ENCODE measurements at regions of chr14 and their contacts with region 1.

Region 1: GRCh38 chr14:91911474-91912032 is 35.9 kb downstream of the FBLN5 start:
- DNase-seq: no peak
- H3K4me3 ChIP-seq: no peak overlapping the region
- H3K27ac ChIP-seq: no peak overlapping the region
- H3K4me1 ChIP-seq: no peaks in the 10 kb centered on the region
- H3K27me3 ChIP-seq: no peaks in the 10 kb centered on the region
- CTCF ChIP-seq: peak in 2 of 3 experiments; percentile 28 to 43
- EP300 ChIP-seq: no peak
- POLR2A ChIP-seq: no peak

Region 2: GRCh38 chr14:91277546-91278382 is 633.8 kb before region 1 on chr14:
- intact Hi-C with region 1: no loop called
- DNase-seq: no peak
- H3K4me3 ChIP-seq: no peak overlapping the region
- H3K27ac ChIP-seq: no peak overlapping the region
- H3K4me1 ChIP-seq: no peaks in the 10 kb centered on the region
- H3K27me3 ChIP-seq: no peaks in the 10 kb centered on the region
- CTCF ChIP-seq: no peak
- EP300 ChIP-seq: no peak
- POLR2A ChIP-seq: no peak

Region 3: DNA sequence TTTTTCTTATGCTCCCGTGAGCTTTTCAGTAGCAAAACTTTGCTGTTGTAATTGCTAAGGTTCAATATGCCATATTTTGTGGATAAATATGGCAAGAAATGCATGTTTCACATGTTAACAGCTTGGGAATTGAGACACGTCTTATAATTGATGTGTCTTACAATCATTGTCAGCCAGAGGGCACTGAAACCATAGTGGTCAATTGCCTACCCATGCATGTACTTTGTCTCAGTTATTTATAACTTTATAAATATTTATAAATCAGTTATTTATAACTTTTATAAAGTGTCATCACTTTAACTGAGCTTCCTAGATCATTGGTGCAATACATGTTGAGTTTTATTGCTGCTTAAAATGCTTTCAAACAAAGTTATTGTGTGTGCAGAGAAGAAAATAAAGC is 261.6 kb before region 1 on chr14:
- intact Hi-C with region 1: loop called (anchors 2 kb)
- DNase-seq: no peak
- H3K4me3 ChIP-seq: no peak overlapping the region
- H3K27ac ChIP-seq: no peak overlapping the region
- H3K4me1 ChIP-seq: peaks cover 0 to 7% (median 5%) of the 10 kb centered on the region in 4 donors
- H3K27me3 ChIP-seq: no peaks in the 10 kb centered on the region
- CTCF ChIP-seq: peak; percentile 66 to 75 (median 67)
- EP300 ChIP-seq: no peak
- POLR2A ChIP-seq: no peak

Measured in esophagus muscularis mucosa (tissue), 4 donors.